ENCODE measurements at regions of chr1 and their contacts with region 1.

Region 1: GRCh38 chr1:61049850-61050540 is 32.4 kb upstream of the NFIA start:
- DNase-seq: peak; percentile 66 to 97
- H3K4me3 ChIP-seq: peak overlapping the region; percentile 72 to 97
- H3K27ac ChIP-seq: peak overlapping the region; percentile 97 to 98
- H3K4me1 ChIP-seq: peaks cover 6 to 21% of the 10 kb centered on the region in 2 donors
- H3K27me3 ChIP-seq: no peaks in the 10 kb centered on the region
- CTCF ChIP-seq: peak; percentile 90 to 98 (median 97)

Region 2: GRCh38 chr1:61005614-61006580 is 44.1 kb before region 1 on chr1:
- intact Hi-C with region 1: no loop called
- DNase-seq: no peak
- H3K4me3 ChIP-seq: no peak overlapping the region
- H3K27ac ChIP-seq: no peak overlapping the region
- H3K4me1 ChIP-seq: peaks cover 0 to 11% of the 10 kb centered on the region in 2 donors
- H3K27me3 ChIP-seq: no peaks in the 10 kb centered on the region
- CTCF ChIP-seq: no peak

Region 3: DNA sequence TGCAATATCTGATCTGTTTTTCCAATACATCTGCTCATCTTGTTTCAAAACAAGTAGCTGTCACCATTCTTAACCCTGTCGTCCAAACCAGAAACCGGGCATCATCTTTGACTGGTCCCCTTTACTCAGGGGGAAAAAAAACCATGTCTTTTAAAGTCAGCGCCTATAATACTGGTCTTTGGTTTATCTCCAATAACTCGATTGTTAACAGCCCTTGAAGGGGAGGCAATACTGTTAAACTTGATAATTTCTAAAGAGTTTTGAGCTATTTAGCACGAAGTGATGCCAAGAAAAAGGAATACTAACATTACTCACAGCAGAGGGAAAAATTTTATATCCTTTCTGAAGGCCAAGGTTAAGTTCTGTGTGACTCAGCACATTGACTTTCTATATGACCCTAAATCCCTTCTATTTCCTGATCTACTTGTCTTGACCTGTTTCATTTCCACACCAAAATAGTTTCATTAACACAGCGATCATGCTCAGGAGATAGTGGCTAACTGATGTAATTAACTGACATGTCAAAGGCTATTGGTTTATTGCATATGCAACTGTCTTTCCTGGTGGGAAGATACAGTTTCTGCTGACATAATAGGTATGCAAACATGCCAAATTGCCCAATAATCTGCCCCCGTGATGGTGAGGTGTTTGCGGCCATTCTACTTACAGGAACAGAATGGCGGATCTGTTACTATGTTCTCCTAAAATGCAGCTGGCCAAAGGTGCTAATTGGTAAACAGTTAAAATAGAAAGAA is 91.5 kb after region 1 on chr1:
- intact Hi-C with region 1: loop called (anchors 5 kb)
- DNase-seq: no peak
- H3K4me3 ChIP-seq: peak overlapping the region; percentile 6 to 20
- H3K27ac ChIP-seq: peak overlapping the region; percentile 62 to 79
- H3K4me1 ChIP-seq: peaks cover 3 to 59% of the 10 kb centered on the region in 2 donors
- H3K27me3 ChIP-seq: no peaks in the 10 kb centered on the region
- CTCF ChIP-seq: no peak

Region 4: GRCh38 chr1:61254634-61255357 is 204.8 kb after region 1 on chr1:
- intact Hi-C with region 1: no loop called
- DNase-seq: no peak
- H3K4me3 ChIP-seq: peak overlapping the region; percentile 37 to 60
- H3K27ac ChIP-seq: peak overlapping the region; percentile 38 to 73
- H3K4me1 ChIP-seq: peaks cover 9 to 33% of the 10 kb centered on the region in 2 donors
- H3K27me3 ChIP-seq: no peaks in the 10 kb centered on the region
- CTCF ChIP-seq: no peak

Region 5: GRCh38 chr1:61279570-61279969 is 229.6 kb after region 1 on chr1:
- intact Hi-C with region 1: loop called (anchors 5 kb)
- DNase-seq: no peak
- H3K4me3 ChIP-seq: peak overlapping the region in 1 of 2 donors; percentile 10
- H3K27ac ChIP-seq: peak overlapping the region; percentile 68 to 76
- H3K4me1 ChIP-seq: peaks cover 0 to 27% of the 10 kb centered on the region in 2 donors
- H3K27me3 ChIP-seq: no peaks in the 10 kb centered on the region
- CTCF ChIP-seq: no peak

Region 6: GRCh38 chr1:61641578-61642336 is 591.8 kb after region 1 on chr1:
- intact Hi-C with region 1: loop called (anchors 2 kb)
- DNase-seq: peak; percentile 47 to 92
- H3K4me3 ChIP-seq: peak overlapping the region; percentile 14 to 62
- H3K27ac ChIP-seq: peak overlapping the region; percentile 91 to 94
- H3K4me1 ChIP-seq: peaks cover 29 to 44% of the 10 kb centered on the region in 2 donors
- H3K27me3 ChIP-seq: no peaks in the 10 kb centered on the region
- CTCF ChIP-seq: peak; percentile 73 to 92 (median 77)